ENCODE measurements at regions of chr5 and their contacts with region 1.

Region 1: GRCh38 chr5:149561848-149562247 is 10.6 kb upstream of the CSNK1A1 start:
- DNase-seq: peak; percentile 75 to 88
- ATAC-seq: peak; percentile 81 to 83
- H3K4me3 ChIP-seq: peak overlapping the region; percentile 7; the same call in 2 of the 3 replicates
- H3K27ac ChIP-seq: peak overlapping the region; percentile 90 to 91
- H3K4me1 ChIP-seq: peaks cover 39% of the 10 kb centered on the region
- CTCF ChIP-seq: no peak
- EP300 ChIP-seq: no peak
- POLR2A ChIP-seq: no peak
- RAD21 ChIP-seq: peak in 1 of 2 experiments; percentile 12; a peak in 1 of 5 replicates

Region 2: GRCh38 chr5:149228618-149229297 is 333.1 kb before region 1 on chr5:
- CTCF ChIA-PET with region 1: no interaction called
- POLR2A ChIA-PET with region 1: no interaction called
- DNase-seq: peak; percentile 74 to 85
- ATAC-seq: peak; percentile 93 to 98
- H3K4me3 ChIP-seq: no peak overlapping the region
- H3K27ac ChIP-seq: peak overlapping the region; percentile 19 to 25; a peak in 2 of 6 replicates
- H3K4me1 ChIP-seq: peaks cover 16% of the 10 kb centered on the region; the same call in 1 of the 3 replicates
- CTCF ChIP-seq: peak; percentile 64
- EP300 ChIP-seq: no peak
- POLR2A ChIP-seq: no peak
- RAD21 ChIP-seq: peak; percentile 78 to 86

Region 3: DNA sequence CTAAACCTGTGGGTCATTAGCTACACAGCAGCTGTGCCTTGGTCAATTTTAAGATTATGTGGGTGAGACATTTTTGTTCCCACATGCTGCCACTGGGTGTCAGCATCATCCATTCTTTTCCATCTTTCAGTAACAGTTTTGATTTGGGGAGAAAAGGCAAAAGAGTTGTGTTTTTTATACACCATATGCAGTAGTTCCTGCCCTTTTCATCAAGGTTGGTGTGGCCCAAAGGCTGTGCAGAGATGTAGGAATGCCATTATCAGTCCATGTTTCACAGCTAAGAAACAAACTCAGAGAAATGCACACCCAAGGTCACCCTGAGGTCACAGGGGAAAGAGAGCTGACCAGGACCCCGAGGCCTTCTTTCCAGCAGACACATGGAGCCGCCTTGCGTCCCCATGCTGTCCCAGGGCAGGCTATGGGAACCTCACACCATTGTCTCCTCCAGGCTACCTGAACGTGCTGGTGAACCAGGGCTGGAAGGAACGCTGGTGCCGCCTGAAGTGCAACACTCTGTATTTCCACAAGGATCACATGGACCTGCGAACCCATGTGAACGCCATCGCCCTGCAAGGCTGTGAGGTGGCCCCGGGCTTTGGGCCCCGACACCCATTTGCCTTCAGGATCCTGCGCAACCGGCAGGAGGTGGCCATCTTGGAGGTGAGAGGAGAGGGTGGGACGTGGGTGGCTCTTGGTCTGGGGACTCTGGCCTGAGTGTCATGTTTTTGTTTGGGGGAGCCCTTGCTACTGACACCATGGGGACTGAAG is 244.4 kb before region 1 on chr5:
- CTCF ChIA-PET with region 1: interaction called, 10 read pairs
- POLR2A ChIA-PET with region 1: interaction called, 4 read pairs
- DNase-seq: peak; percentile 51 to 69
- ATAC-seq: peak; percentile 55 to 72; a peak in 5 of 6 replicates
- H3K4me3 ChIP-seq: no peak overlapping the region
- H3K27ac ChIP-seq: peak overlapping the region in 1 of 2 experiments; percentile 28; a peak in 1 of 6 replicates
- H3K4me1 ChIP-seq: peaks cover 15% of the 10 kb centered on the region
- CTCF ChIP-seq: peak; percentile 87
- EP300 ChIP-seq: no peak
- POLR2A ChIP-seq: no peak
- RAD21 ChIP-seq: peak; percentile 80 to 87

Region 4: GRCh38 chr5:149381987-149382340 is 179.9 kb before region 1 on chr5:
- CTCF ChIA-PET with region 1: interaction called, 58 read pairs
- POLR2A ChIA-PET with region 1: no interaction called
- DNase-seq: peak; percentile 68 to 86
- ATAC-seq: peak; percentile 89 to 98
- H3K4me3 ChIP-seq: no peak overlapping the region
- H3K27ac ChIP-seq: peak overlapping the region; percentile 43 to 72; a peak in 2 of 6 replicates
- H3K4me1 ChIP-seq: no peaks in the 10 kb centered on the region; the same call in 2 of the 3 replicates
- CTCF ChIP-seq: peak; percentile 91
- EP300 ChIP-seq: no peak
- POLR2A ChIP-seq: no peak
- RAD21 ChIP-seq: peak; percentile 89 to 92

Region 5: DNA sequence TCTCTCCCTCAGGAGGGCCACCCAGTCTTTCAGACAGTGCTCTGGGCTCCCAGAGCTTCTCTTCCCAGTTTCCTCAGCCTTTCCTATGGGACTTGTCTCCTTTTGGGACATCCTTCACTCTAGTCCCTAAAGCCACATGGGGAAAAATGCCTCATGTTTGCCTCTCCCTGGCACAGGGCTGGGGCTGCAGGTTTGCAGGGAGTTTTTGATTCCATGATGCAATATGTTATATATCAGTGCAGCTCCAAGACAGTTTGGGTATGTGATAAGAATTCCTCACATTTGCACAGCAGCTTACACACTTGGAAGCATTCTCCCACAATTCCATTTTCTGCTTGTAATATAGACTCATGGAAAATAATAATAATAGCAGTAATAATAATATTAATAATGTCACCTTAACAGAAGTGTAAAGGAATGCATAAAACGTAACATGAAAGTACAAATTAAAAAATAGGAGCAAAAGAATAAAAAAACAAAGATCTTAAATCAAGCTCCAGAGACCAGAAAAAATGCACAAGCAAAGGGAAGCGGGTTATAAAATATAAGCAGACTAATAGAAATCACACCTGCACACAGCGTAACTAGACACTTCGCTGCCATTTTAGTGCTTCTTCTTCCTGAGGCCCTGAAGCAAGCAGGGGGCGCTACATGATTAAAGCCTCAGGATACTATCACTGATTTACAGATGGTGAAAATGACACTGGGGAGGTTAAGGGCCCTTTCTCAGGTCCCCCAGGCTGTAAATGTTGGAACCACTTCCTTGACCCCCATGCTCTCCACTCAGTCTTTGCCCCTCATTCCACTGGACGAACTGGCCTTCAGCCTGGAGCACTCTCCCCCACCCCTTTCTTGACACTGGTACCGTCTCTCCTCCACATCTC is 112.8 kb before region 1 on chr5:
- CTCF ChIA-PET with region 1: interaction called, 209 read pairs
- POLR2A ChIA-PET with region 1: interaction called, 9 read pairs
- DNase-seq: peak in 1 of 2 experiments; percentile 60
- ATAC-seq: peak in 1 of 2 experiments; percentile 56; a peak in 3 of 6 replicates
- H3K4me3 ChIP-seq: no peak overlapping the region
- H3K27ac ChIP-seq: peak overlapping the region; percentile 14 to 50; a peak in 3 of 6 replicates
- H3K4me1 ChIP-seq: peaks cover 31% of the 10 kb centered on the region
- CTCF ChIP-seq: peak; percentile 28
- EP300 ChIP-seq: no peak
- POLR2A ChIP-seq: no peak
- RAD21 ChIP-seq: peak; percentile 36 to 53; a peak in 4 of 5 replicates

Region 6: GRCh38 chr5:149551200-149552037 is 10.4 kb before region 1 on chr5 and contains the start of gene CSNK1A1:
- CTCF ChIA-PET with region 1: interaction called, 49 read pairs
- POLR2A ChIA-PET with region 1: interaction called, 65 read pairs
- DNase-seq: peak; percentile 98 to 99
- ATAC-seq: peak; percentile 96
- H3K4me3 ChIP-seq: peak within 1 kb of the TSS; percentile 85
- H3K27ac ChIP-seq: peak within 1 kb of the TSS; percentile 97
- H3K4me1 ChIP-seq: peaks cover 30% of the 10 kb centered on the region
- CTCF ChIP-seq: peak; percentile 78
- EP300 ChIP-seq: no peak
- POLR2A ChIP-seq: peak; percentile 58
- RAD21 ChIP-seq: peak; percentile 71 to 73
- polyA plus RNA-seq, gene CSNK1A1: 180 and 218 TPM in 2 replicates

Region 7: DNA sequence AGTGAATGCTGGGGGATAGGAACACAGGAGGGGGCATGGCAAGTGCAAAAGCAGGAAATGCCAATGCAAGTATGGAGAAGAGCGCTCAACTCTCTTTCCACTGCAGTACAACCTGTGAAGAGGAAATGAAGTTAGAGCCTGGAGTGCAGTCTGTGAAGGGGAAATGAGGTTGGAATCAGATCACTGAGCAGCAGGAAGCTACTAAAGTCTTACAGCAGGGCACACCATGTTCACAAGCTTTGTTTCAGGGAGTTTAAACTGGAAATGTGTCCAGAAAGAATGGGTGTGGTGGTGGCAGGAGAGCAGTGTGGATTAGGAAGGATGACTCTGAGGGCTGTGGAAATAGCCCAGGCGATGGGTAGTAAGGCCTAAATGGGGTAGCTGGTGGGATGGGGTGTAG is 34.9 kb after region 1 on chr5:
- CTCF ChIA-PET with region 1: interaction called, 10 read pairs
- POLR2A ChIA-PET with region 1: no interaction called
- DNase-seq: no peak
- ATAC-seq: no peak
- H3K4me3 ChIP-seq: no peak overlapping the region
- H3K27ac ChIP-seq: no peak overlapping the region
- H3K4me1 ChIP-seq: peaks cover 8% of the 10 kb centered on the region; the same call in 2 of the 3 replicates
- CTCF ChIP-seq: no peak
- EP300 ChIP-seq: no peak
- POLR2A ChIP-seq: no peak
- RAD21 ChIP-seq: no peak